ENCODE measurements at regions of chr3 and their contacts with region 1.

Region 1: GRCh38 chr3:4978204-4978965 is 852 bp upstream of the BHLHE40 start:
- DNase-seq: peak; percentile 98
- H3K4me3 Mint-ChIP-seq: peak overlapping the region; percentile 87
- H3K27ac Mint-ChIP-seq: peak overlapping the region; percentile 99
- H3K4me1 Mint-ChIP-seq: peaks cover 48% of the 10 kb centered on the region
- H3K27me3 Mint-ChIP-seq: no peaks in the 10 kb centered on the region

Region 2: GRCh38 chr3:4722103-4722502 is 256.3 kb before region 1 on chr3:
- CTCF ChIA-PET with region 1: interaction called, 31 read pairs
- POLR2A ChIA-PET with region 1: interaction called, 7 read pairs
- intact Hi-C with region 1: loop called (anchors 1 kb)
- DNase-seq: peak; percentile 41
- H3K4me3 Mint-ChIP-seq: no peak overlapping the region
- H3K27ac Mint-ChIP-seq: no peak overlapping the region
- H3K4me1 Mint-ChIP-seq: peaks cover 19% of the 10 kb centered on the region
- H3K27me3 Mint-ChIP-seq: no peaks in the 10 kb centered on the region

Region 3: GRCh38 chr3:4826237-4827100 is 151.9 kb before region 1 on chr3:
- CTCF ChIA-PET with region 1: interaction called, 39 read pairs
- POLR2A ChIA-PET with region 1: interaction called, 83 read pairs
- intact Hi-C with region 1: loop called (anchors 1 kb)
- DNase-seq: no peak
- H3K4me3 Mint-ChIP-seq: peak overlapping the region; percentile 70
- H3K27ac Mint-ChIP-seq: peak overlapping the region; percentile 85
- H3K4me1 Mint-ChIP-seq: peaks cover 94% of the 10 kb centered on the region
- H3K27me3 Mint-ChIP-seq: no peaks in the 10 kb centered on the region

Region 4: GRCh38 chr3:4888913-4889846 is 89.2 kb before region 1 on chr3:
- CTCF ChIA-PET with region 1: interaction called, 8 read pairs
- POLR2A ChIA-PET with region 1: interaction called, 6 read pairs
- intact Hi-C with region 1: loop called (anchors 1 kb)
- DNase-seq: peak; percentile 67
- H3K4me3 Mint-ChIP-seq: no peak overlapping the region
- H3K27ac Mint-ChIP-seq: peak overlapping the region; percentile 90
- H3K4me1 Mint-ChIP-seq: peaks cover 31% of the 10 kb centered on the region
- H3K27me3 Mint-ChIP-seq: no peaks in the 10 kb centered on the region

Region 5: GRCh38 chr3:4994823-4995499 is 16.6 kb after region 1 on chr3:
- CTCF ChIA-PET with region 1: interaction called, 9 read pairs
- POLR2A ChIA-PET with region 1: interaction called, 16 read pairs
- intact Hi-C with region 1: no loop called
- DNase-seq: peak; percentile 29
- H3K4me3 Mint-ChIP-seq: no peak overlapping the region
- H3K27ac Mint-ChIP-seq: peak overlapping the region; percentile 60
- H3K4me1 Mint-ChIP-seq: peaks cover 30% of the 10 kb centered on the region
- H3K27me3 Mint-ChIP-seq: no peaks in the 10 kb centered on the region

Region 6: GRCh38 chr3:5057857-5058324 is 79.5 kb after region 1 on chr3:
- CTCF ChIA-PET with region 1: interaction called, 15 read pairs
- POLR2A ChIA-PET with region 1: interaction called, 5 read pairs
- intact Hi-C with region 1: loop called (anchors 1 kb)
- DNase-seq: peak; percentile 87
- H3K4me3 Mint-ChIP-seq: no peak overlapping the region
- H3K27ac Mint-ChIP-seq: no peak overlapping the region
- H3K4me1 Mint-ChIP-seq: peaks cover 16% of the 10 kb centered on the region
- H3K27me3 Mint-ChIP-seq: peaks cover 8% of the 10 kb centered on the region

Region 7: DNA sequence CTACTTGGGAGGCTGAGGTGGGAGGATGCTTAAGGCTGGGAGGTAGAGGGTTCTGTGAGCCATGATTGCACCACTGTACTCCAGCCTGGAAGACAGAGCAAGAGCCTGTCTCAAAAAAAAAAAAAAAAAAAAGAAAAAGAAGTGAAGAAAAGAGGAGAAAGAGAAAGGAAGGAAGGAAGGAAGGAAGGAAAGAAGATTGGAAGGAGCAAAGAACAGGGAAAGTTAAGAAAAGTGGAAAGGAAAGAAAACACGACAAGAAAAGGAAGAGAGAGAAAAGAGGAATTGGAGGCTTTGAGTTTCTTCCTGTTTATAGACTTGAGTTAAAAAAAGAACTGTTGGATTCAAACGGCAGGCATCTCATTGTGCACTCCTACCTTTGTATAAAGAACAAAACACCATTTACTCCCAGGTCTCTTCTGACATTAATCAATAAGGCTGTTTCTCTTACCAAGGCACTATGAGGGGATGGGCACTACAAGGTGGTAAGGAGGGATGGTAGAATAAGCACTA is 282.7 kb after region 1 on chr3:
- CTCF ChIA-PET with region 1: no interaction called
- POLR2A ChIA-PET with region 1: no interaction called
- intact Hi-C with region 1: no loop called
- DNase-seq: no peak
- H3K4me3 Mint-ChIP-seq: no peak overlapping the region
- H3K27ac Mint-ChIP-seq: no peak overlapping the region
- H3K4me1 Mint-ChIP-seq: peaks cover 7% of the 10 kb centered on the region
- H3K27me3 Mint-ChIP-seq: no peaks in the 10 kb centered on the region

Measured in activated CD4-positive, alpha-beta memory T cell treated with anti-CD3 and anti-CD28 coated beads for 36 hours (primary cell).